ENCODE measurements at regions of chr17 and their contacts with region 1.

Region 1: GRCh38 chr17:1673041-1673785 is 11.5 kb downstream of the PRPF8 start:
- DNase-seq: peak; percentile 51
- H3K4me3 Mint-ChIP-seq: no peak overlapping the region
- H3K27ac Mint-ChIP-seq: peak overlapping the region; percentile 70
- H3K4me1 Mint-ChIP-seq: peaks cover 32% of the 10 kb centered on the region
- H3K27me3 Mint-ChIP-seq: no peaks in the 10 kb centered on the region

Region 2: DNA sequence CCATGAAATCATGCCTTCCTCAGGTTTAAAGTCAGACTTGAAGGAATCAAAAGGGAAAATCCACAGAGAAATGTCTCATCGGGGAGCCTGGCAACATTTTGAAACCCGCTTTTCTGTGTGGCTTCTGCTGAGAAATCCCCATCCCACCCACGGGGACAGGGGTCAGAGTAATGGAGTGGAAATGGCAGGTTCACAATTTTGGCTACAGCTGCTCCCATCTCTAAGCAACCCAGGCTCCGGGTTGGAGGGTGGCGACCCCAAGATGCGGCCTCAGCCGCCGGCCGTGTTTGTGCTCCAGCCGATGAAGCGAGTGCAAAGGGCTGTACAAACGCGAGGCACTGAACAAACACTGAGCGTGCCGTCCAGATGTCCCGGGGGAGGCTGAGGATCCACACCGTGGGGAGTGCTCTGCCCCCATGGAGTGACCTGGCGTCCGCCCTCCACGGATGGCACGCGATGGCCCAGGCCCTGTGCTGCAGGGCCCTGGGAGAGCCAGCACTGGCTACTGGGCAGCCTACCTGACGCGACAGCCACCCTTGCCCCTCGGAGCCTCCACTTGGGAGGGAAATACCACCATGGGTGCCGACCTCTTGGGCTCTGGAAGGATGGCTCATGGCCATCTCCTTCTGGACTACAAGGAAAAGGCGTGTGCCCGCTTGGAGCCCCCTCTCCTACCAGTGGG is 66.7 kb before region 1 on chr17:
- CTCF ChIA-PET with region 1: no interaction called
- POLR2A ChIA-PET with region 1: no interaction called
- DNase-seq: no peak
- H3K4me3 Mint-ChIP-seq: no peak overlapping the region
- H3K27ac Mint-ChIP-seq: no peak overlapping the region
- H3K4me1 Mint-ChIP-seq: peaks cover 11% of the 10 kb centered on the region
- H3K27me3 Mint-ChIP-seq: no peaks in the 10 kb centered on the region

Region 3: DNA sequence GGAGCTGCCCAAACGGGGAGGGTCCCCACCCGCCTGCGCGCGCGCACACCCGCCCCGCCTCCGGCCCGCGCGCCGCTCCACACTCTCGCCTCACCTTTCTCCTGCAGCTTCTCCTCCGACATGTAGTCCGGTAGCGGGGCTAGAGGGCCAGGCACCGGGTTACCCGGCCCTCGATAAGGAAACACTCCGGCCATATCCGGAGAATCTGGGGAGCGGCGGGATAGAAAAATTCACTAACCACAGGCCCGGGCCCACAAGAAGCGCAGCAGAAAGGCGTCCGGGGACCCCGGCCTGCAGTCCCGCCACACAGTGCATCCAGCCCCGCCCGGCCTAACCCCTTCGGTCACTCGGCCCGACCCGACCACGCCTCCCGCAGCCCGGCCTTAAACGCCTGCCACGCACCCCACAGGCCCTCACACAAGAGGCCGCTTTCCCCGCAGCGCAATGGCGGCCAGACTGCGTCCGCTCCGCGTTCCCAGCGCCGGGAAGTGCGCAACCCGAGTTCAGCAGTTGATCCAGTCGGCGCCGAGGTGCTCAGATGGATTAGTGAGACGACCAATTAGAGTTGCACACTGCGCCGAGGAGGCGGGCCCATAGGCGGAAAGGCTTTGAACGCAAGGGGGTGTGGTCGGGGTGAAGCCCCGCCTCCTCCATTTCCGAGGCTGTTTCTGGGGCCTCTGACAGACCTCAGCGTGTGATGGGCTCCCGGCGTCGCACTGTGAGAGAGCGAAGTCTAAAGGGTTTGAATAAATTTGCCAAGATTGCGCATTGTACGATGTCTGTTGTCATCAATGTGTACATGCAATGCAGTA is 11.4 kb after region 1 on chr17 and contains the start of gene PRPF8:
- CTCF ChIA-PET with region 1: interaction called, 28 read pairs
- POLR2A ChIA-PET with region 1: interaction called, 11 read pairs
- DNase-seq: peak; percentile 99
- H3K4me3 Mint-ChIP-seq: peak within 1 kb of the TSS; percentile 99
- H3K27ac Mint-ChIP-seq: peak within 1 kb of the TSS; percentile 94
- H3K4me1 Mint-ChIP-seq: peaks cover 38% of the 10 kb centered on the region
- H3K27me3 Mint-ChIP-seq: no peaks in the 10 kb centered on the region
- total RNA-seq, gene PRPF8: 264 to 267 TPM

Region 4: DNA sequence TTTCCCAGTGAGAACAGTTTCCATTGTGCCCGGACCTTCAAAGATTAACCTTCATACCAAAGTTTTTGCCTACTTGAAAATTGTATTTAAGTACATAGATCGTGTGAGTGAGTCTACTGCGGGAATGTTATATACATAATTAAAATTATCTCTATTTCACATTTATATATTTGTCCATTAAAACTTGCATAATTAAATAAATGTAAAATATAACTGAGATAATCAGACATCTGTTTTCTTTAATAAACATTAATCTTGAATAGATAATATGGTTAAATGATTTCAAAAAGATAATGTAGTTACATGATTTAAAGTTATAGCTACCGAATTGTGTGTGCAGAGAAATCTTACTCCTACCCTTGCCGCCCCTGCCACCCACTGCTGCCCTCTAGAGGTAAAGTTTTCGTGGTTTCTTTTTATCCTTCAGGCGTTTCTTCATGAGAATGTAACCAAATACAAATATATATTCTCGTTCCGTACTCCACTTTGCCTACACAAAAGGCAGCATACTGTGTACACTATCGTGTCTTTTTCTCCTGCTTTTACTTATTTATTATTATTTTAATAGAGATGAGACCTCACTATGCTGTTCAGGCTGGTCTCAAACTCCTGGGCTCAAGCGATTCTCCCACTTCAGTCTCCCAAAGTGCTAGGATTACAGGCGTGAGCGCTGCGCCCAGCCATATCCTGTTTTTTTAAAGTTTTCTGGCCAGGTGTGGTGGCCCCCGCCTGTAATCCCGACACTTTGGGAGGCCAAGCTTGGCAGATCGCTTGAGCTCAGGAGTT is 192.2 kb after region 1 on chr17:
- CTCF ChIA-PET with region 1: interaction called, 11 read pairs
- POLR2A ChIA-PET with region 1: no interaction called
- DNase-seq: peak; percentile 63
- H3K4me3 Mint-ChIP-seq: no peak overlapping the region
- H3K27ac Mint-ChIP-seq: no peak overlapping the region
- H3K4me1 Mint-ChIP-seq: peaks cover 21% of the 10 kb centered on the region
- H3K27me3 Mint-ChIP-seq: no peaks in the 10 kb centered on the region